ENCODE measurements at regions of chr6 and their contacts with region 1.

Region 1: DNA sequence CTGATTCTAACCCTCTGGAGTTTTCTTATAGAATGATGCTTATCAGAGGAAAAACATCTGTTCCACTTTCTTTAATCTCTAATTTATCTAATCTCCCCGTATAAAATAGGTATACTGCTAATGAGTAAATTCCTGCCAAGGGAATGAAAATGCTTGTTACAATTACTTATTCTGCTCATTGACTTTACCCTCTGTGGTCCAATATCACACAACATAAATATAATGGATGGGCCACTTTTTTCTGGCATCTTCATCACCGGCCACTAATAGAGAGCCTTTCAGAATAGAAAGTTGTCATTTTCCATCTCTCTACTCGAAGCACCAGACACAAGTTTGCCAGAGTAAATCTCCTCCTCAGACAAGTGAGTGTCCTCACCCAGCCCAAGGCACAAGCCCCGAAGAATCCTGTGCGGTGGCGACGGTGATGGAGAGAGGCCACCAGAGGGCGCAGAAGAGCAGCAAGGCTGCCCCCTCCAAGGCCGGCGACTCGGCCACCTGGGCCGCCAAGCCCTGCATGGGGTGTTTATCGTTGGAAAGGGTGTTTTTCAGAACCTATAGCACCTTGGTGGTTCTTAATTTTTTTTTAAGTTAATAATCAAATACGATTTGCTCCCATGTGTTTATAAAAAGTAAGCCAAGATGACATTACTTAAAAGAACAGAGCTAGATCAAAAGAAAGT is 212.9 kb upstream of the ARID1B start:
- DNase-seq: peak; percentile 80 to 88
- ATAC-seq: peak; percentile 97 to 99 (median 98)
- H3K4me3 ChIP-seq: no peak overlapping the region
- H3K27ac ChIP-seq: no peak overlapping the region
- H3K4me1 ChIP-seq: no peaks in the 10 kb centered on the region
- H3K27me3 ChIP-seq: peaks cover 0 to 6% (median 0%) of the 10 kb centered on the region in 3 donors
- CTCF ChIP-seq: peak; percentile 96

Region 2: DNA sequence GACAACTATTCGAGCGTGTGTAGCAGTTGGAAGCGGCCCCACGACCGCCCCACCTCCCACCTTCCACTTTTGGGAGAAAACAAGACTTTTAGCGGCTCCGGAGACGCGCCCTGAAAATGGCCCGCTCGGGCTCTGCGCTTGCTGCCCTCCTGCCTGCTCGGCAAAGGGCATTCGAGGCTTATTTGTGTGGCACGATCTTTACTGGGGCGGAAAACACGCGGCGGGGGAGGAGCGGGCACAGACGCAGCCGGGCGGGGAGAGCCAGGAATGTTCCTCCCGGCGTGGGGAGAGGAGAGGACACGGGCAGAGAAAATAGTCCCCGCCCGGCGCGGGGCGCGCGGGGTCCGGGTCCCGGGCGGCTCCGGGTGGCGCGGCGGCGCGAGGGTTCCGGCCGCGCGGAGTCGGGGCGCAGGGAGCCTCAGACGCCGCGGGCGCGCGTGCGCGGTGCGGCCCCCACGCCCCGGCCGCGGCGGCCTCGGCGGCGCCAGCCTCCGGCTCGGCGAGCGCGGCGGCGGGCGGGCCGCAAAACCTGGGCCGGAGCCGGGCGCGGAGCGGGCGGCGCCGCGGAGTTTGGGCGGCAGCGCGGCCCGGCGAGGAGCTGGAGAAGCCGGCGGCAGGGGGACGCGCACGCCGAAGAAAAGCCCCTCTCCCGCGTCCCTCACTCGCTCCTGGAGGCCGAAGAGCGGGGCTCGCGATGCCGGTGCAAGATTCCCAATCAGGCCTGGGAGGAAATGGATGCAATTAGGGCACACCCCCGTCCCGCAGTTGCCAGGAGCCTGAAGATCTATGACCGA is 122.9 kb after region 1 on chr6:
- intact Hi-C with region 1: loop called (anchors 2 to 5 kb)
- DNase-seq: peak; percentile 90 to 96
- ATAC-seq: peak; percentile 94 to 97 (median 96)
- H3K4me3 ChIP-seq: peak overlapping the region; percentile 84
- H3K27ac ChIP-seq: peak overlapping the region; percentile 96
- H3K4me1 ChIP-seq: peaks cover 11% of the 10 kb centered on the region
- H3K27me3 ChIP-seq: no peaks in the 10 kb centered on the region
- CTCF ChIP-seq: no peak

Region 3: DNA sequence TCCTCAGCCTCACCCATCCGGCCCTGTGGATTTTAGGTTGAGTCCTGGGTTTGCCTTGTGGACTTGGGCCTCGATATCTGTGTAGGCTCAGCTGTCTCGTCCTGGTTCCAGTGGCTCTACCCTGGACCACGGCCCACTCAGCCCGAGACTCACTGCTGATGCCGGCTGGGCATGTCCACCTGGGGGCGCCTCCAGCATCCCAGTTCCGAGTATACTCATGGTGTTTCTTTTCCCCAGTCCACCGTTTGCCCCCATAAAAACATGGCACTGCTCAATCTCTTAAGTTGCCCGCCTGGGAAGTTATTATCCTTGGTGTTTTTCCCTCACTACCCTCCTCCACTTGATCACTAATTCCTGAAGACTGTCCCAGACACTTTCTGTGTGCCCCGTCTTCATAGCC is 312.0 kb after region 1 on chr6:
- intact Hi-C with region 1: loop called in 1 of 2 experiments (anchors 10 kb)
- DNase-seq: peak; percentile 43 to 74
- ATAC-seq: peak; percentile 65 to 68 (median 66)
- H3K4me3 ChIP-seq: no peak overlapping the region
- H3K27ac ChIP-seq: peak overlapping the region; percentile 7
- H3K4me1 ChIP-seq: peaks cover 77% of the 10 kb centered on the region
- H3K27me3 ChIP-seq: no peaks in the 10 kb centered on the region
- CTCF ChIP-seq: peak; percentile 26

Region 4: DNA sequence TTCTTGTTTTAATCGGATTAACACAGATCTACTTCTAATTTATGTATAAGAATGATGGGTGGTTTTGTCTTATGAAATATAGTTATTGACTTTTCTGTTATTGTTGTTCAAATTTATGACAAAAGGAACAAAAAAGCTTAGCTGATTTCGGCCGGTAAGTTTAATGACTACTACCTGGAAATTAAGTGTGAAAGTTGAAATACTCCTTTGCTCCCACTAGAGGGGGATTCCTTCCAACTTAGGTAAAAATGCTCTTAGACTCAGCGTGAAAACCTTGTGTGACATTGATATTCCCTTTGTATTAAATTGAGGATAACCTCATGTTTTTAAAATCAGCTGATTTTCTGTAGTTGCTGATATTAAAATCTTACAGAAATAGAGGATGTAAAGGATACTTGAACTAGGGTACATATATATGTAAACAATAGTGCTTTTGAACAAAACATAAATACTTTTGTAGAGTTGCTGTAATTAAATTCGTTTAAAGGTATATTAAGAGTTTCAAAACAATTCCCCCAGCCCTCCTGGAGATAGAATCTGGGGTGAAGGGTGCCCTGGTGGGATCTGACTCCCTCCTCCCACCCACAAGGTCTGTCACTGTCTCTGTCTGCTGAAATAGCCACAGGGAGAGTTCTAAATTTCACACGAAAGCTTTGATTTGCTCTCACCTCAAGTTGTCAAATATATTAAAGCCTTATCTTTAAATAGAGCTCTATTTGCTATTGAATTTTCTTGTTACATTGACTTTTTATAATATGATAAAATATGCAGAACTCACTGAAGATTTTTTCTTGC is 470.4 kb after region 1 on chr6:
- intact Hi-C with region 1: loop called in 1 of 2 experiments (anchors 5 kb)
- DNase-seq: no peak
- ATAC-seq: peak in 2 of 4 donors; percentile 49 to 67
- H3K4me3 ChIP-seq: no peak overlapping the region
- H3K27ac ChIP-seq: no peak overlapping the region
- H3K4me1 ChIP-seq: peaks cover 44% of the 10 kb centered on the region
- H3K27me3 ChIP-seq: no peaks in the 10 kb centered on the region
- CTCF ChIP-seq: peak; percentile 59

Region 5: DNA sequence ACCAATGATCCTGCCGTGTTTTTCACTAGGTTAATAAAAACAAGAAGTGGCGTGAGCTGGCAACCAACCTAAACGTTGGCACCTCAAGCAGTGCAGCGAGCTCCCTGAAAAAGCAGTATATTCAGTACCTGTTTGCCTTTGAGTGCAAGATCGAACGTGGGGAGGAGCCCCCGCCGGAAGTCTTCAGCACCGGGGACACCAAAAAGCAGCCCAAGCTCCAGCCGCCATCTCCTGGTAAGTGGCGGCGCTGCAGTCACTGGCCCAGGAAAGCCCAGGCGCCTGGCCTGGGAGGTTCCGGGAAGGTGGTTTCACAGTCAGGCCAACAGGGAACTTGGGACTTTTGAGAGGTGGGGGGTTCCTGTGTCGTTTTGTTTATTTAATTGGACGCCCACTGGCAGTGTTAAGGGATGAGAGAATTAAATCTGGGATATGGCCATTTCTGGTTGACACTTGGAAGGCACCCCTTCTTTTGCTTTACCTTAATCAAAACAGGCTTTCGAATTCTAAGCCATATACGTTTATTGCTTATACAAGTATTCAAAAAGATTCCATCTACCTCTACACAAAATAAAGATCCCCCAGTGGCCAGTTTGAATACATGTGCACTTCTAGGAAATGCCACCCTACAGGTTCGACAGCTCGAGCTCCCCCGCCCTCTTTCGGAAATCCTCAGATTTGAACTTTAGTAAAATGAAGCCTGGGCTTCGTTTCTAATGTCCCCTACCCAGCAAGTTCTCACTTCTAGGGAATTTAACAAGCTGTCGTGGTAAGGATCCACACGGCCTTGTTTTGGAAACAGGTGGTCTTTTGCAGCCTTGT is 620.1 kb after region 1 on chr6:
- intact Hi-C with region 1: loop called (anchors 10 kb)
- DNase-seq: peak; percentile 74 to 82
- ATAC-seq: peak; percentile 63 to 77 (median 75)
- H3K4me3 ChIP-seq: no peak overlapping the region
- H3K27ac ChIP-seq: peak overlapping the region; percentile 85
- H3K4me1 ChIP-seq: peaks cover 18% of the 10 kb centered on the region
- H3K27me3 ChIP-seq: no peaks in the 10 kb centered on the region
- CTCF ChIP-seq: peak; percentile 88